ENCODE measurements at regions of chr7 and their contacts with region 1.

Region 1: GRCh38 chr7:92447345-92448204 is at the start of gene GATAD1:
- DNase-seq: no peak
- H3K4me3 ChIP-seq: peak within 1 kb of the TSS; percentile 81 to 98 (median 94)
- H3K27ac ChIP-seq: peak within 1 kb of the TSS; percentile 91 to 96
- H3K4me1 ChIP-seq: peaks cover 4 to 11% (median 5%) of the 10 kb centered on the region in 4 experiments
- H3K27me3 ChIP-seq: no peaks in the 10 kb centered on the region

Region 2: GRCh38 chr7:92421676-92422435 is 25.7 kb before region 1 on chr7:
- CTCF ChIA-PET with region 1: interaction called, 19 read pairs
- POLR2A ChIA-PET with region 1: no interaction called
- DNase-seq: peak in 2 of 3 donors; percentile 63 to 65
- H3K4me3 ChIP-seq: no peak overlapping the region
- H3K27ac ChIP-seq: no peak overlapping the region
- H3K4me1 ChIP-seq: peaks cover 7 to 34% (median 25%) of the 10 kb centered on the region in 4 experiments
- H3K27me3 ChIP-seq: no peaks in the 10 kb centered on the region

Region 3: GRCh38 chr7:92461027-92462003 is 13.7 kb after region 1 on chr7:
- CTCF ChIA-PET with region 1: interaction called, 21 read pairs
- POLR2A ChIA-PET with region 1: no interaction called
- DNase-seq: peak; percentile 42 to 71 (median 68)
- H3K4me3 ChIP-seq: no peak overlapping the region
- H3K27ac ChIP-seq: no peak overlapping the region
- H3K4me1 ChIP-seq: no peaks in the 10 kb centered on the region
- H3K27me3 ChIP-seq: no peaks in the 10 kb centered on the region